ENCODE measurements at regions of chr5 and their contacts with region 1.

Region 1: GRCh38 chr5:38193015-38193581 is 65.3 kb upstream of the EGFLAM start:
- DNase-seq: peak; percentile 62 to 74
- ATAC-seq: peak; percentile 72 to 91; a peak in 4 of 6 replicates
- H3K4me3 ChIP-seq: no peak overlapping the region
- H3K27ac ChIP-seq: no peak overlapping the region
- H3K4me1 ChIP-seq: no peaks in the 10 kb centered on the region
- CTCF ChIP-seq: peak; percentile 87
- EP300 ChIP-seq: no peak
- POLR2A ChIP-seq: no peak
- RAD21 ChIP-seq: peak; percentile 89 to 91

Region 2: GRCh38 chr5:37412515-37413277 is 780.4 kb before region 1 on chr5:
- CTCF ChIA-PET with region 1: interaction called, 46 read pairs
- POLR2A ChIA-PET with region 1: no interaction called
- DNase-seq: peak; percentile 83 to 88
- ATAC-seq: peak; percentile 95 to 97
- H3K4me3 ChIP-seq: no peak overlapping the region
- H3K27ac ChIP-seq: no peak overlapping the region
- H3K4me1 ChIP-seq: no peaks in the 10 kb centered on the region
- CTCF ChIP-seq: peak; percentile 99
- EP300 ChIP-seq: no peak
- POLR2A ChIP-seq: no peak
- RAD21 ChIP-seq: peak; percentile 93 to 94

Region 3: GRCh38 chr5:37837414-37838032 is 355.6 kb before region 1 on chr5:
- CTCF ChIA-PET with region 1: interaction called, 28 read pairs
- POLR2A ChIA-PET with region 1: no interaction called
- DNase-seq: peak; percentile 69 to 71
- ATAC-seq: peak; percentile 58 to 80; a peak in 5 of 6 replicates
- H3K4me3 ChIP-seq: peak overlapping the region; percentile 51
- H3K27ac ChIP-seq: no peak overlapping the region
- H3K4me1 ChIP-seq: peaks cover 18% of the 10 kb centered on the region
- CTCF ChIP-seq: peak; percentile 73
- EP300 ChIP-seq: no peak
- POLR2A ChIP-seq: no peak
- RAD21 ChIP-seq: peak; percentile 82

Region 4: DNA sequence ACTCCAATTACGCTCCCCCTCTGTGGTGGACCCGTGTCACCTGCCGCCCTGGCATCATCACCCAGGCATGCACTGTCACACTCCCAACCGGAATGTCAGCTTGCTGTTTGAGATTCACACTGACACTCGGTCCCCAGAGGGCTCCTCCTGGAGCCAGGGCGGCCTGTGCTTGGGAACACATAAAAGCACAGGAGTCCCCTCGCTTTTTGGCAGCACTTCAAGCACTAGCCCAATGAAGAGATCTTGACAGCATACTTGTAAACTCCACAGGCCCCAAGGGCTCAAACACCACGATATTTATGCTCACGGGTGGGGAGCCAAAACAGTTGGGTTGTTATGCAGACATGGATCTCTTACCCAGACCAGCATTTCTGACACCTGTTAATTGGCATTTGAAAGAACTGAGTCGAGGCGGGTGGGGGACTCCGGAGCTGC is 25.5 kb before region 1 on chr5:
- CTCF ChIA-PET with region 1: interaction called, 12 read pairs
- POLR2A ChIA-PET with region 1: no interaction called
- DNase-seq: no peak
- ATAC-seq: no peak
- H3K4me3 ChIP-seq: no peak overlapping the region
- H3K27ac ChIP-seq: no peak overlapping the region
- H3K4me1 ChIP-seq: no peaks in the 10 kb centered on the region
- CTCF ChIP-seq: no peak
- EP300 ChIP-seq: no peak
- POLR2A ChIP-seq: no peak
- RAD21 ChIP-seq: no peak

Region 5: DNA sequence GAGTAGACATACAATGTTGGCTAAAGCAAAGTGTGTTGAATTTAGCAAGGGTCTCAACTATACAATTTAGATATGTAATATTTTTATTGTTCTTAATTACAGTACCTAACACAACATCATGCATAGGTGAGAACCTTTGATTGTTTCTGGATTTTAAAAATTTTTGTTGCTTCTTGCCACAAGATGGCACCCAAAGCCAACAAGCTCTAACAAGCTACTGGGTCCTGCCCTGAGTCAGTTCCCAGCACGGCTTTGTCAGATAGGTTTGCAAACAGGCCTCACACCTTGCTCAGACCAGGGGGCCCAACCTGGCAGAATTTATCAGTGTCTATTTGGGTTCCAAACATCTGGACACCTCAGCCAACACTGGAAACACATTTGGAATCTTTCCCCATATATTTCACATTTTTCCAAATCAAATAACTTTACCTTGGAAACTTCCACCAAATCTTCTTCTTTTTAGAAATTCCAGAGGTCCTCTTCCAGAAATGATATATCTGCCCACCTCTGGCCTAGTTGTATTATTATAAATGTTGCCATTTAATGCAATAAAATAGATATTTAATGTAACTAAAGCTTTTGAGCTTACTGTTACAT is 15.8 kb after region 1 on chr5:
- CTCF ChIA-PET with region 1: interaction called, 16 read pairs
- POLR2A ChIA-PET with region 1: no interaction called
- DNase-seq: peak; percentile 19 to 61
- ATAC-seq: peak; percentile 74 to 82; a peak in 5 of 6 replicates
- H3K4me3 ChIP-seq: no peak overlapping the region
- H3K27ac ChIP-seq: no peak overlapping the region
- H3K4me1 ChIP-seq: no peaks in the 10 kb centered on the region
- CTCF ChIP-seq: peak; percentile 68
- EP300 ChIP-seq: no peak
- POLR2A ChIP-seq: no peak
- RAD21 ChIP-seq: peak; percentile 76 to 79

Measured in A549 (cell line).